ENCODE measurements at regions of chrX and their contacts with region 1.

Region 1: DNA sequence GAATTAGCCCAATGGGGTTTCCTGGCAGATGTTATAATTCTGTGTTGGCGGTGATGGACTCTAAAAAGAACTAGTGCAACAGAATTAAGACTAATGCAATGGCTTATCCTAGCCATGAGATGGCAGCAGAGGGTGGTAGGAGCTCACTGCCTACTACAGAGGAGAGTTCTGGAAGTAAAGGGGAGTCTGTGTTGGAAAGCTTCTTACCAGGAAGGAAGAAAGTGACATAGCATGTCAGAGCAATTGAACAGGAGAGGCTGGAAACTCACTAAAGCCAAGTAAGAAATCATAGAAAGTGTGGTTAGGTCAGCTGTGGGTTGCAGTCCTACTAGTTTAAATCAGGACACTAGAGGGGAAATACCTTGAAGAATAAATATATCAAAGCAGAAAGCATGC is 6.3 kb upstream of the TRPC5OS start:
- DNase-seq: no peak
- ATAC-seq: peak; percentile 65

Region 2: GRCh38 chrX:112048707-112049106 is 179.1 kb after region 1 on chrX:
- intact Hi-C with region 1: loop called (anchors 5 kb)
- DNase-seq: no peak
- ATAC-seq: no peak

Region 3: GRCh38 chrX:112147206-112147605 is 277.6 kb after region 1 on chrX:
- intact Hi-C with region 1: loop called (anchors 2 kb)
- DNase-seq: no peak
- ATAC-seq: no peak

Region 4: GRCh38 chrX:112642349-112642748 is 772.7 kb after region 1 on chrX:
- intact Hi-C with region 1: loop called (anchors 1 kb)
- DNase-seq: no peak
- ATAC-seq: peak; percentile 54

Measured in Right ventricle myocardium inferior (tissue), 1 donor.